Pancreas (tissue), 10 donors: ENCODE measurements at regions of chr4 and their contacts with region 1.

Region 1: DNA sequence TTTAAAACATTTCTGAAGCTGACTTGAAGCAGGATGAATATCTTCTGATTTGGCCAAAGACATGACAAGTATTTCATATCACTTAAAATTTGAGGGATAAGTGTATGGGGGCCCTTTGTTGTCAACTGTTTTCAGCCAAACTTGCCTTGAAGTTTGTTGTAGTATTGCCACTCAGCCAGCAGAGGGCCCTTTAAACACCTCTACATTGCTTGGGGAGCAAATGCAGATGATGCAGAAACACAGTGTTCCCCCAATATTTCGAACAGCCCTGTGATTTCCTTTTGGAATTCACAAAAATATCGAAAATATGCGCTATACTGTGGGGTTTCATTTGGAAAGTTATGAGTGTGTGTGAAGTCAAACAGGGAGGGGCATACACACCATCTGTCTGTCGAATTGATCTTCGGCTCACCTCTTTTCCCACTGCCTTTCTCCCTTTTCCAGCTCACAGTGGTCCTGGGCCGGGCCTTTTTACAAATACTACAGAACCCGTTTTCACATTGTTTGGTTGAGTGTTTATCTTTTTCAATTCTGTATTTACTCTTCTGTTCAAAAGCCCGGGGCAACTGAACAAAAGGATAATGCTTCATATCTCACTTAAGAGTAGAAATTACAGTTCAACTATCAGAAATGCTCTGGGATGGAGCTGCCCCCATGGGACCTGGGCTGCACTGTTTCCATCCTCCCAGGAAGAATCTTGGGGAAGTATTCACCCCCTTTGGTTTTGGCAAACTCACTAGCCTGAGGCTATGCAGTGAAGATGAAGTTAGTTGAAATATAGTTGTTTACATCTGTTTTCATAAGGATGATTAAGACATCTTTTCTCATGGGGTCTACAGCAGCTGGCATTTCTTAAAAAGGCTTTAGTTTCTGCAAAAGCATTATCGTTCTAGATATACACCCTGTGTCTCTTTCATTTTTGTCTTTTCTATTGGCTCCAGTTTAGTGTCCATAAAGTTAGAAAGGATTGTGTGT is 137.6 kb downstream of the EGF start:
- DNase-seq: peak in 1 of 6 donors; percentile 40
- ATAC-seq: peak in 3 of 4 donors; percentile 67 to 78 (median 71)
- H3K4me3 ChIP-seq: no peak overlapping the region
- H3K27ac ChIP-seq: no peak overlapping the region
- H3K4me1 ChIP-seq: no peaks in the 10 kb centered on the region
- H3K27me3 ChIP-seq: no peaks in the 10 kb centered on the region
- CTCF ChIP-seq: peak in 3 of 4 donors; percentile 33 to 65 (median 55)

Region 2: DNA sequence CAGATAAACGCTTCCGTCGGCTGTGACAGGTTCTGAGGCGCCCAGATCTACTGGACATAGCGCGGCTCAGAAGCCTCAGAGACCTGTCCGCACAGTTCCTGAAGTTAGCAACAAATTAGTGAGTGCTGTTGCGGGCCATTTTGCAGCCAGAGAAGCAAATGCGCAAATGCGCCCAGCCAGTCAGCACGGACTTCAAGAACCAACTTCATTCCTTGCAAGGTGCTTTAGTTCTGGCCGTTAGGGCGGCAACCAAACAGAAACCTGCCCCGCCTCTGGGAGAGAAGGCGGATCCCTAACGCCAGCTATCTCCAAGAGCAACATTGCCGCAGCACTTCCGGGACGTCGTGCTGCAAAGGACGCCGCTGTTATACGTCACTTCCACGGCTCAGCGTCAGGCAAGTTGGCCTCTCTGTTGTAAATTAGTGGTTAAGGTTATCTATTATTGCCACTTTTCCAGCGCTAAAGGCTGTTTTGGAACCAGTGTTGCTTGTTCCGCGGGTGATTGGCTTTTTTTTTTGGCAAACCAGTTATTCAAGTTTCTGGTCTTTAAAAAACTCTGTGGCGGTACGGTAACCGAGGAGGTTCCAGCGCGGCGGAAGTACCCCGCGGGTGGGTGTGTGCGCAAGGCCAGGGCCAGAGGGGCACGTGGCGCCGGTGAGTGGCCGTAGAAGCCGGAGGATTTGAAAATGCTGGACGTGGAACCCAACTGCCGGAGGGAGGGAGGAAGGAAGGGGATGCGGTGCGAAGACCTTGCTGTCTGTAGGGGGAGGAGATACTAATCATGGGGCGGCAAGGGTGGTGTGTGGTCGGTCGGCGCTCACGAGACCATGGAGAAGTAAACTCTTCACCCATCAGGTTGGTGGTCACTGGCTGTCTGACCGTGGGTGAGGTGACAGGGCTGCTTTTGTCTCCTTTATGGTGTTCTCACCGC is 234.8 kb before region 1 on chr4 and contains the start of gene GAR1:
- intact Hi-C with region 1: no loop called
- DNase-seq: peak; percentile 85 to 94 (median 91)
- ATAC-seq: peak; percentile 98 to 99 (median 98)
- H3K4me3 ChIP-seq: peak within 1 kb of the TSS; percentile 67 to 83 (median 76)
- H3K27ac ChIP-seq: peak within 1 kb of the TSS; percentile 69 to 92 (median 90)
- H3K4me1 ChIP-seq: peaks cover 0 to 17% (median 0%) of the 10 kb centered on the region in 3 donors
- H3K27me3 ChIP-seq: no peaks in the 10 kb centered on the region
- CTCF ChIP-seq: no peak
- total RNA-seq, gene GAR1: 3.2 to 8.7 (median 6.1) TPM

Region 3: GRCh38 chr4:110201502-110201901 is 151.3 kb after region 1 on chr4:
- intact Hi-C with region 1: loop called in 1 of 3 experiments (anchors 10 kb)
- DNase-seq: no peak
- ATAC-seq: no peak
- H3K4me3 ChIP-seq: no peak overlapping the region
- H3K27ac ChIP-seq: no peak overlapping the region
- H3K4me1 ChIP-seq: no peaks in the 10 kb centered on the region
- H3K27me3 ChIP-seq: no peaks in the 10 kb centered on the region
- CTCF ChIP-seq: no peak

Region 4: GRCh38 chr4:110211007-110211769 is 160.9 kb after region 1 on chr4:
- intact Hi-C with region 1: loop called in 2 of 3 experiments (anchors 5 to 10 kb)
- DNase-seq: peak in 1 of 6 donors; percentile 21
- ATAC-seq: peak; percentile 58 to 88 (median 82)
- H3K4me3 ChIP-seq: no peak overlapping the region
- H3K27ac ChIP-seq: no peak overlapping the region
- H3K4me1 ChIP-seq: no peaks in the 10 kb centered on the region
- H3K27me3 ChIP-seq: no peaks in the 10 kb centered on the region
- CTCF ChIP-seq: peak; percentile 39 to 75 (median 70)